ENCODE measurements at regions of chr5 and their contacts with region 1.

Region 1: DNA sequence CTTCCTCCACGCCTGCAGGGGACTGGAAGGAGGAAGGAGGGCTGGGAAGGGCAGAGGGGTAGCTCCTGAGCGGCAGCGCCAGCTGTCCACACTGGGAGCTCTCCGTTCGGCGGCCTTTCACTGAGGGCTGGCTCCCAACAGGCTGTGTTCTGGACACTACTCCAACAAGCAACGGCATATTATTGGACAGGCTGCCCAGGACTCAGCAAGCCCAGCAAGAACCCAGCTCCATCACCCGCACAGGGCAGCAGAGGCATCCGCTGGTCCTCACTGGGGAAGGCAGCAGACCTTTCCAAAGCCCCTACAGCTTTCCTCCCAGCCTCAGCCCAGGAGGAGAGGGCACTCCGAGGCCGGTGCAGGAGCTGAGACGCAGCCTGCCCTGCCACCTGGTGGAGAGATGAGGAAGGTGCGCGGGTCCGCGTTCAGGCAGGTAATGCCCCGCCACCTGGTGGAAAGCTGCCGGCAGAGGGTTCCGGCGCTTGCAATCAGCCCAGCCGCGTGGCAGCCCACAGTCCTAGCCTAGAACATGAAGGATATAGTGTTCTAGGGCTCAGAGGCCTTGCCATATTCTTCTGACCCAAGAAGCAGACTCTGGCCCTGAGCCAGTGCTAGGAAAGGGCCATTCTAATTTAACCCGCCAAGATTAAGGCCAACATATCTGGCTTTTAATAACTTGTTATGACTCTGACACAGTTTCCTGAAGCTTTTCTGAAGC is 74.4 kb downstream of the NRG2 start:
- H3K4me3 ChIP-seq: no peak overlapping the region
- H3K27ac ChIP-seq: no peak overlapping the region
- H3K4me1 ChIP-seq: no peaks in the 10 kb centered on the region; the same call in 1 of the 2 replicates
- CTCF ChIP-seq: peak; percentile 100

Region 2: DNA sequence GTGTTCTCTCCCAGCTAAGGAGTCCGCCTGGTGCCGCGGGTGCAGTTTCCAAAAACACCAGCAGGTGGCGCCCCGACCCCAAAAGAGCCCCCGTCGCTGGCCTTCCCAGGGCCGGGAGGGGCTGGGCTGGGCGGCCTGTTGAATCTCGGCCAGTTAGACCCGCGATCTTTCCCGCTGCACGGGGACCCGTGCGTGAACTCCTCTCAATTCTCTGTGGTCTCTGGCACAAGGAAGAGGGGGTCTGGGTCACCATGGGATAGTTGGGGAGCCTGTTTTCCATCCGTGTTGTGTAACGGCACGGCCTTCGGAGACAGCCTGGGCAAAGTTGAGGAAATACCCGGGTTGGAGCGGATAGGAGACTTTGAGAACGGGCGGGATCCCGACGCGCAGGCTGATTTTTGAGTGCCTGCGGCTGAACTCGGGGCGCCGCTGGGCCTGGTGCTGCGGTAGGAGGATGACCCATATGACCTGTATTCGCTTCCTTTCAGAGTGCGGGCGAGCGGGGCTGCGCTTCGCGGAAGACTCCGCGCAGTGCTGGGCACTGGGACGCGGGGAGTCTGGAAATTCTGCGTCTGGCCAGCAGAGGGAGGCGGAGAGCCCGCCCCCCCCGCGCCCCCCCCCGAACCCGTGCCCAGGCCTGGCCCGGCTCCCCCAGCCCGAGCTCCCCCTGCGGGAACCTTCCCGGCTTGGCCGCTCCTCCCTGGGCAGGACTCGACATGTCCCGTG is 181.0 kb before region 1 on chr5:
- CTCF ChIA-PET with region 1: interaction called, 214 read pairs
- POLR2A ChIA-PET with region 1: interaction called, 4 read pairs
- H3K4me3 ChIP-seq: peak overlapping the region; percentile 48
- H3K27ac ChIP-seq: peak overlapping the region; percentile 56; the same call in 1 of the 2 replicates
- H3K4me1 ChIP-seq: no peaks in the 10 kb centered on the region
- CTCF ChIP-seq: peak; percentile 79; the same call in 1 of the 2 replicates

Region 3: GRCh38 chr5:139856714-139857113 is 112.0 kb before region 1 on chr5:
- CTCF ChIA-PET with region 1: interaction called, 85 read pairs
- POLR2A ChIA-PET with region 1: no interaction called
- H3K4me3 ChIP-seq: no peak overlapping the region
- H3K27ac ChIP-seq: no peak overlapping the region
- H3K4me1 ChIP-seq: no peaks in the 10 kb centered on the region
- CTCF ChIP-seq: no peak

Region 4: GRCh38 chr5:139888370-139888769 is 80.3 kb before region 1 on chr5:
- CTCF ChIA-PET with region 1: interaction called, 12 read pairs
- POLR2A ChIA-PET with region 1: no interaction called
- H3K4me3 ChIP-seq: no peak overlapping the region
- H3K27ac ChIP-seq: no peak overlapping the region
- H3K4me1 ChIP-seq: no peaks in the 10 kb centered on the region
- CTCF ChIP-seq: no peak

Region 5: GRCh38 chr5:139942243-139942642 is 26.5 kb before region 1 on chr5:
- CTCF ChIA-PET with region 1: interaction called, 34 read pairs
- POLR2A ChIA-PET with region 1: no interaction called
- H3K4me3 ChIP-seq: no peak overlapping the region
- H3K27ac ChIP-seq: no peak overlapping the region
- H3K4me1 ChIP-seq: no peaks in the 10 kb centered on the region
- CTCF ChIP-seq: no peak

Region 6: GRCh38 chr5:140005145-140005591 is 36.5 kb after region 1 on chr5:
- CTCF ChIA-PET with region 1: interaction called, 16 read pairs
- POLR2A ChIA-PET with region 1: no interaction called
- H3K4me3 ChIP-seq: no peak overlapping the region
- H3K27ac ChIP-seq: no peak overlapping the region
- H3K4me1 ChIP-seq: no peaks in the 10 kb centered on the region
- CTCF ChIP-seq: no peak

Region 7: GRCh38 chr5:140362860-140363630 is 394.3 kb after region 1 on chr5:
- CTCF ChIA-PET with region 1: no interaction called
- POLR2A ChIA-PET with region 1: no interaction called
- H3K4me3 ChIP-seq: peak overlapping the region; percentile 33
- H3K27ac ChIP-seq: no peak overlapping the region; the same call in 1 of the 2 replicates
- H3K4me1 ChIP-seq: no peaks in the 10 kb centered on the region
- CTCF ChIP-seq: peak; percentile 94